PC-9 (cell line): ENCODE measurements at regions of chr3 and their contacts with region 1.

Region 1: DNA sequence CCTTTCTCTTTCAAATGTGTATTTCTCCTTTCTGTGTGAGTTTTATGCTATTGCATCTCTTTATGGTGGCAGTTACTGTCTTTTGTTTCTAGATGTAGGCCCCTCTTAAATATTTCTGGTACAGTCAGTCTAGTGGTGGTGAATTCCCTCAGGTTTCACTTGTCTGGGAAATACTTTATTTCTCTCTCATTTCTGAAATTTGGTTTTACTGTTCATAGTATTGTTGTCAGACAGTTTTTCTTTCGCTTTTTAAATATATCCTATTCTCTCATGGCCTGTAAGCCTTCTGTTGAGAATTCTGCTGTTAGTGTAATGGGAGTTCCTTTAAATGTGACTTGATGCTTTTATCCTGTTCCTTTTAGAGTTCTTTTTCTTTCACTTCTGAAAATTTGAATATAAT is 874.0 kb downstream of the PLOD2 start:
- DNase-seq: no peak
- H3K4me3 ChIP-seq: no peak overlapping the region
- H3K27ac ChIP-seq: no peak overlapping the region
- H3K4me1 ChIP-seq: no peaks in the 10 kb centered on the region
- H3K27me3 ChIP-seq: no peaks in the 10 kb centered on the region
- CTCF ChIP-seq: no peak

Region 2: GRCh38 chr3:145015253-145015652 is 271.7 kb before region 1 on chr3:
- CTCF ChIA-PET with region 1: no interaction called
- POLR2A ChIA-PET with region 1: interaction called, 3 read pairs
- intact Hi-C with region 1: loop called (anchors 10 kb)
- DNase-seq: no peak
- H3K4me3 ChIP-seq: no peak overlapping the region
- H3K27ac ChIP-seq: no peak overlapping the region
- H3K4me1 ChIP-seq: no peaks in the 10 kb centered on the region
- H3K27me3 ChIP-seq: no peaks in the 10 kb centered on the region
- CTCF ChIP-seq: no peak

Region 3: DNA sequence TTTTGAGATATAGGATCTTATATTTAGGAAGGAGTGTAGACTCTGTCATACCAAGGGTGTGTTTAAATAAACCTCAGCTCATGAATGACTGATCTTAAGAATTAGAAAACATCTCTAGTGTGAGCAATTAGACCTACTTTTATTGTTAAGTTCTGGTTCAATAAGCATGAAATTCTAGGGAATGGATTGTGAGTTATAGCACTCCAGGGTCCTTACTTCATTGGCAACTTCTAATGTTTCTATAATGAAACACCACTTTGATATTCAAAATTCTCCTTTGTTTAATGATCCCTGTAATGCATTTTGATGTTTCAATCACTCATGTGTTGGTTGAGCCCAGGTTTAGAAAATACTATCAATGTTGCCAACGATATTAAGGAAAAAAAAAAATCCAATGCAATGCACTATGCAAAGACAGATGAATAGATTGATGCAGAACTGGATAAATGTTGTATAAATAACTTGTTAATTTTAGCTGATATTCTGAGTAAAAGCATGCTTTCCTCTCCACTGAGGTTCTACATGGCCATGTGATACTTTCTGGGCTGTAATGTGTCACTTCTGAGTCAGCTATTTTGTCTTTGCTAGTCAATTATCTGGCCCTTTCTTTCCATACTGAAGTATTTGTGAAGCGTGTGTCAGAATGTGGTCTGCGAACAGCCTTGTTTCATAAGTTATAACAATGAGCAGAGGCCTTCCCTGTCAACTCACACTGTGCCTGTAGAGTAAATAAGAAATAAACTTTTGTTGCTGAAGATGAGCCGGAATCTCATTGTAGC is 161.8 kb before region 1 on chr3:
- CTCF ChIA-PET with region 1: no interaction called
- POLR2A ChIA-PET with region 1: no interaction called
- intact Hi-C with region 1: no loop called
- DNase-seq: no peak
- H3K4me3 ChIP-seq: no peak overlapping the region
- H3K27ac ChIP-seq: no peak overlapping the region
- H3K4me1 ChIP-seq: no peaks in the 10 kb centered on the region
- H3K27me3 ChIP-seq: no peaks in the 10 kb centered on the region
- CTCF ChIP-seq: no peak

Region 4: DNA sequence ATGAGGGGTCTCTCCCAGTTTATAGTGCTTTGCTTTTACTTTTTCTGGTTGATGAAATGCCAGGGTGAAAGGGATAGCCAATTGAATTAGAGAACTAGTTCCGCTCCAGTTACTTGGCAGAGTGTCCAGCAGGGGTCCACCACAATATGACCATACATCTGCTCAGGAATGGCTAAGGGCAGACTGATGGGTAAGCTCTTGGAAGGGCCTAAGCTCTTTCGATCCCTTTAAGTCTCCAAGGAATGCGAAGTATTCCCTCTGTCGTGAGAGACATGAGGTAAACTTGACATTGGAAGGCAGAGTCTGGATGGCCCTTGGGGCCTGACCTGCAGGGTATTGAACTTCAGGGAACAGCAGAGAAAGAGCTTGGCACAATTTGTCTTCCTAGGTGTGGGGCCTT is 68.2 kb after region 1 on chr3:
- CTCF ChIA-PET with region 1: no interaction called
- POLR2A ChIA-PET with region 1: no interaction called
- intact Hi-C with region 1: no loop called
- DNase-seq: no peak
- H3K4me3 ChIP-seq: no peak overlapping the region
- H3K27ac ChIP-seq: no peak overlapping the region
- H3K4me1 ChIP-seq: no peaks in the 10 kb centered on the region
- H3K27me3 ChIP-seq: no peaks in the 10 kb centered on the region
- CTCF ChIP-seq: no peak